ENCODE measurements at regions of chr15 and their contacts with region 1.

Region 1: GRCh38 chr15:67070892-67071664 is 5.7 kb downstream of the SMAD3 start:
- DNase-seq: no peak
- ATAC-seq: no peak
- H3K4me3 ChIP-seq: peak overlapping the region; percentile 93 to 98
- H3K27ac ChIP-seq: peak overlapping the region; percentile 100
- H3K4me1 ChIP-seq: peaks cover 58% of the 10 kb centered on the region
- H3K27me3 ChIP-seq: no peaks in the 10 kb centered on the region
- CTCF ChIP-seq: no peak

Region 2: GRCh38 chr15:67136802-67137201 is 65.7 kb after region 1 on chr15:
- CTCF ChIA-PET with region 1: no interaction called
- POLR2A ChIA-PET with region 1: interaction called, 18 read pairs
- in situ Hi-C with region 1: no loop called
- intact Hi-C with region 1: no loop called
- DNase-seq: no peak
- ATAC-seq: no peak
- H3K4me3 ChIP-seq: no peak overlapping the region
- H3K27ac ChIP-seq: peak overlapping the region; percentile 100
- H3K4me1 ChIP-seq: peaks cover 99% of the 10 kb centered on the region
- H3K27me3 ChIP-seq: no peaks in the 10 kb centered on the region
- CTCF ChIP-seq: no peak